ENCODE measurements at regions of chr12 and their contacts with region 1.

Region 1: DNA sequence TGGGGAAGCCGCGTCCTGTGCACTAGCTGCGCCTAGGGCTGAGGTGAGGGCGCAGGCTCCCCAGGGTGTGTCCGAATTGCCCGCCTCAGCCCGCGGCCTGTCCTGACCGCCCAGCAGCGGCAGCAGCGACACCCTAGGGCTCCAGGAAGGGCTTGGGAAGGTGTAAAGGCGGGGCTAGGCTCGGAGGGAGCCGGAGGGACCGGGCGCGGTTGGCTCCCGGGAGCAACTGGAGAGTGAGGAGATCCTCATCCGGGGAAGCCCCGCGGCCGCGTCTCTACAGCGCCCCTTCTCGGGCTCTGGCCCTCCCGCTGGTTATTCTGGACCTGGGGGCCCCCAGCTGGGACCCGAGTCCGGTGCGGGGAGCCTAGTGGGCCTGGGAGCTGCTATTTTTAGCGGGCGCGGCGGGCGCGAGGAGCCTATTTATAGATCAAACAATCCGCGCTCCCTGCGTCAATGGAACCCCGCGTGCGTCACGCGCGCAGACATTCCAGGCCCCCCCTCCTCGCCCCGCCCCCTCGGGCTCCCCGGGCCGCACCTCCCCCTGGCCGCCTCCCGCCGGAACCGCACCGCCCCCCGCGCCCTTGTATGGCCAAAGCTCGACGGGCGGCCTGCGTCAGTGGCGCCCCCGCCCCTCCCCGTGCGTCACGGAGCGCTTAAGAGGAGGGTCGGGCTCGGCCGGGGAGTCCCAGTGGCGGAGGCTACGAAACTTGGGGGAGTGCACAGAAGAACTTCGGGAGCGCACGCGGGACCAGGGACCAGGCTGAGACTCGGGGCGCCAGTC is at the start of gene NR4A1:
- DNase-seq: peak; percentile 99
- ATAC-seq: peak; percentile 70 to 92 (median 86)
- H3K4me3 ChIP-seq: peak within 1 kb of the TSS; percentile 38 to 77 (median 66)
- H3K27ac ChIP-seq: peak within 1 kb of the TSS; percentile 88 to 98 (median 96)
- H3K4me1 ChIP-seq: peaks cover 31 to 87% (median 60%) of the 10 kb centered on the region in 9 donors
- H3K27me3 ChIP-seq: peaks cover 0 to 5% (median 0%) of the 10 kb centered on the region in 7 donors
- CTCF ChIP-seq: peak in 8 of 9 donors; percentile 9 to 69 (median 34)
- total RNA-seq, gene NR4A1: 34.6 to 588 (median 105) TPM

Region 2: GRCh38 chr12:51980051-51980808 is 70.7 kb before region 1 on chr12:
- intact Hi-C with region 1: no loop called
- DNase-seq: peak; percentile 40 to 60
- ATAC-seq: peak; percentile 86 to 95 (median 92)
- H3K4me3 ChIP-seq: no peak overlapping the region
- H3K27ac ChIP-seq: no peak overlapping the region
- H3K4me1 ChIP-seq: peaks cover 0 to 40% (median 0%) of the 10 kb centered on the region in 9 donors
- H3K27me3 ChIP-seq: no peaks in the 10 kb centered on the region
- CTCF ChIP-seq: peak; percentile 95 to 99 (median 97)

Region 3: DNA sequence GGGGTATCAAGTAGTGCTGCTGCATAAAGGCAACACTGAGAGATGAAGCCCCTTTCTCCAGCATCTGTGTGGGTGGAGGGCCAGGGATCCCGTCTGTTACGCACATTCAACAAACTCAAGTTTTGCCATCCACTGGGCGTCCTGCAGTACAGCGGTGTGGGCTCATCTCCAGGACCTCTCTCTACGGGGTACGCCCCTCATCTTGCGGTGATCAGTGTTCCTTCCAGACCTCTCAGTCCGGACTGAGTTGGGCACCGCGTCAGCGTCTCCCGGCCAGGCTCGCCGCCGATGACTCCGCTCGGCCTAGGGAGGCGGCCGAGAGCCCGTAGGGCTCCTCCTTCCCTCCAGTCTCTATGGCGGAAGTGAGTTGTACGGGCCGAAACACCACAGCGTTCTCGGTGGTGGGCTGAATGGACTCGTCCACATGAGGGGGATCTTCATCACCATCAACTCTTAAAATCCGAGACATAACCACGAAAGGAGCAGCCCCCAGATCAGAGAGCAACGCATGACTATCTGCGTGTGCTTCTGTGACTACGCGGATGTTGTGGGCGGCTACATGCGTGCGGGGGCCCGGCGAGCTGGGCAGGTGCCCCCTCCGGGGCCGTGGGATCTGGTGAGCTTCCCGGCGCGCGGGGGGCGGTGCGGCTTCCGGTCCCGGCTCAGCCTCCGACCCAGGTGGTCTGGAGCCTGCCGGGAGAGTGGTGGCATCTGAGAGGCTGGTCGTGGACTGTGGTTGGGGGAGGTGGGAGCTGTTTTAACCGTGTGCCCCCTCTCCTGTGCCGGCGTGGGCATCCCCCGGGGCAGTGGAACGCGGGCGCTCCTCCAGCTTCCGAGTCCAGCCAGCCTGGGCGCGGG is 18.6 kb after region 1 on chr12 and contains the start of gene ATG101:
- intact Hi-C with region 1: loop called in 1 of 10 experiments (anchors 2 kb)
- DNase-seq: peak; percentile 88 to 93
- ATAC-seq: peak; percentile 96 to 98 (median 97)
- H3K4me3 ChIP-seq: peak within 1 kb of the TSS; percentile 68 to 98 (median 82)
- H3K27ac ChIP-seq: peak within 1 kb of the TSS; percentile 64 to 96 (median 93)
- H3K4me1 ChIP-seq: peaks cover 12 to 54% (median 33%) of the 10 kb centered on the region in 9 donors
- H3K27me3 ChIP-seq: no peaks in the 10 kb centered on the region
- CTCF ChIP-seq: peak; percentile 49 to 87 (median 67)
- total RNA-seq, gene ATG101: 17.5 to 31.8 (median 22.2) TPM

Measured in heart right ventricle (tissue), 16 donors.